ENCODE measurements at regions of chr1 and their contacts with region 1.

Region 1: GRCh38 chr1:85276215-85276977 is at the start of gene BCL10:
- DNase-seq: peak; percentile 95 to 98 (median 97)
- ATAC-seq: peak; percentile 97
- H3K4me3 ChIP-seq: peak within 1 kb of the TSS; percentile 89
- H3K4me3 Mint-ChIP-seq: peak within 1 kb of the TSS; percentile 82 to 95 (median 90)
- H3K27ac ChIP-seq: peak within 1 kb of the TSS; percentile 97
- H3K27ac Mint-ChIP-seq: peak within 1 kb of the TSS; percentile 84 to 97 (median 95)
- H3K4me1 ChIP-seq: peaks cover 17 to 28% of the 10 kb centered on the region in 2 donors
- H3K4me1 Mint-ChIP-seq: peaks cover 36 to 55% (median 47%) of the 10 kb centered on the region in 7 donors
- H3K27me3 ChIP-seq: no peaks in the 10 kb centered on the region
- H3K27me3 Mint-ChIP-seq: peaks cover 0 to 21% (median 0%) of the 10 kb centered on the region in 5 donors
- total RNA-seq, gene BCL10: 30.4 to 53.0 (median 35.4) TPM

Region 2: DNA sequence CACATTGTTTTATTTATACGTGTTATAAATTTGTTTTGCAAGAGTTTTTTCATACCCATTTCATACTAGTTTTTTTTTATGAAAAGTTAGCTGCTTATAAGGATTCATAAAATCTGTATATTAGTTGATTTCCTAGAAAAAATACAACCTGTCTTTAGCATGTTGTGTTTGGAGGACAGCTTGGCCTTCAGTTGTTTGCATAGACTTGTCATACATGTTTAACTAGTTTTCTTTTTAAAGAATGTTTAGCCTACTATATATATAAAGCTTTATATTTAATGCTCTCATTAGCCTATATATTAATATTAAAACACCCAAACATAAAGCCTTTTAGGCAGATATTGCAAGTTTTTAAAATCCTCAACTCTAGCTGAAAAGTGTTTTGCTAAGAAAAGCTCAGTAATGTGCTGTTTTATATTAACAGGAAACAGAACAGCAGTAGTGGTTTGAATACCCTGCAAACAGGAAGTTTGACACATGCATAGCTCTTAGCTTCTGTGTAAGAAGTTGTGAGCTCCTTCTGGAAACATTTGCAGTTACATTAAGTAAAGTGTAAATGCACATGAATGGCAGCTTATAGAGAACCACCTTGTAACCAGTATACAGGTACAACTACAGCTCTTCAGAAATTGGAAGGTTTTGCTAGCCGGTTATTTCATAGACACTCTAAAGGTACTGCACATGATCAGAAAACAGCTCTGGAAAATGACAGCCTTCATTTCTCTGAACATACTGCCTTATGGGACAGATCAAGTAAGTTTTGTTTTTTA is 1132.4 kb before region 1 on chr1 and contains the start of gene PRKACB:
- CTCF ChIA-PET with region 1: no interaction called
- POLR2A ChIA-PET with region 1: interaction called, 6 read pairs
- intact Hi-C with region 1: loop called (anchors 1 to 5 kb)
- DNase-seq: peak in 7 of 9 donors; percentile 59 to 79 (median 70)
- ATAC-seq: peak; percentile 94
- H3K4me3 ChIP-seq: peak within 1 kb of the TSS; percentile 71
- H3K4me3 Mint-ChIP-seq: peak within 1 kb of the TSS; percentile 88 to 100 (median 96)
- H3K27ac ChIP-seq: peak within 1 kb of the TSS; percentile 74
- H3K27ac Mint-ChIP-seq: peak within 1 kb of the TSS; percentile 97 to 100 (median 99)
- H3K4me1 ChIP-seq: peaks cover 27 to 33% of the 10 kb centered on the region in 2 donors
- H3K4me1 Mint-ChIP-seq: peaks cover 17 to 51% (median 39%) of the 10 kb centered on the region in 7 donors
- H3K27me3 ChIP-seq: no peaks in the 10 kb centered on the region
- H3K27me3 Mint-ChIP-seq: no peaks in the 10 kb centered on the region
- total RNA-seq, gene PRKACB: 71.1 to 176 (median 89.3) TPM

Region 3: GRCh38 chr1:84506002-84506728 is 770.2 kb before region 1 on chr1 and contains the starts of genes GNG5 and SPATA1:
- CTCF ChIA-PET with region 1: interaction called, 3 read pairs
- POLR2A ChIA-PET with region 1: no interaction called
- intact Hi-C with region 1: loop called (anchors 2 to 10 kb)
- DNase-seq: peak; percentile 94 to 98 (median 96)
- ATAC-seq: peak; percentile 95
- H3K4me3 ChIP-seq: peak within 1 kb of the TSS; percentile 94
- H3K4me3 Mint-ChIP-seq: peak within 1 kb of the TSS; percentile 94 to 100 (median 98)
- H3K27ac ChIP-seq: peak within 1 kb of the TSS; percentile 76
- H3K27ac Mint-ChIP-seq: peak within 1 kb of the TSS; percentile 93 to 99 (median 96)
- H3K4me1 ChIP-seq: peaks cover 15 to 27% of the 10 kb centered on the region in 2 donors
- H3K4me1 Mint-ChIP-seq: peaks cover 18 to 54% (median 50%) of the 10 kb centered on the region in 7 donors
- H3K27me3 ChIP-seq: no peaks in the 10 kb centered on the region
- H3K27me3 Mint-ChIP-seq: peaks cover 0 to 2% (median 0%) of the 10 kb centered on the region in 5 donors
- total RNA-seq, gene GNG5: 24.8 to 90.7 (median 28.9) TPM
- total RNA-seq, gene SPATA1: 1.7 to 3.6 (median 2.2) TPM in 4 of 5 experiments, not detected in the other

Region 4: DNA sequence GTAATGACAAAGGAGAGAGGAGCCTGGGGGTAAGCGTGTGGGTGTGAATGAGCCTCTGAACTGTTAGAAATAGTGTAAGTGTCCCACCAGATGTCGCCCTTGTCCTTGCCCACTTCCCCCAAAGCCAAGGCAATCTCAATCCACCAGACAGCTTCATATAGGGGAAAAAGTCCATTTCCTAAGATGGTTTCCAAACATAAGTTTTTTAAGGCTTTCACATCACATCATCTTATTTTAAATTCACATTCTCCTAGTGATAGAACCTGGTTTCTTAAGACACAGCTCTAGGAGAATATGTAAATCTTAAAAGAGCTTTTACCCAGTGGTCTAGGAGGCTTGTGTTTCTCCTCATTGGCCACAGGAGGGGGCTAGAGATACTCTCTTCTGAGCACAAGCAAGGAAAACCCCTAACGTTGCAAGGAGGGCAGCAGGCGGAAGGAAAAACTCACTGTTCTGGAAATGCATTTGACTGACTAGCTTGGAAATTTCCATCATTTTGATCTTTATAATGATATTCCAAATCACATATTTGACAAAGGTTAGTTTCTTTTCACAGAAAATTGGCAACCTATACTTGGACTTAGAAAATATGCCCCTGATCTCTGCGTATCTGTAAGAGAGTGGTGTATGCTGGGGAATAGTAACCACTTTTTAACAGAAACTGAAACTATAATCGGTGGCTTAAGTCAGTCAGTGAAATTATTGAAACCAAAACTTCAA is 331.5 kb before region 1 on chr1:
- CTCF ChIA-PET with region 1: interaction called, 13 read pairs
- POLR2A ChIA-PET with region 1: interaction called, 13 read pairs
- intact Hi-C with region 1: loop called (anchors 1 kb)
- DNase-seq: peak; percentile 20 to 94 (median 90)
- ATAC-seq: peak; percentile 98
- H3K4me3 ChIP-seq: peak overlapping the region; percentile 63
- H3K4me3 Mint-ChIP-seq: peak overlapping the region; percentile 72 to 93 (median 86)
- H3K27ac ChIP-seq: peak overlapping the region; percentile 89
- H3K27ac Mint-ChIP-seq: peak overlapping the region; percentile 87 to 98 (median 96)
- H3K4me1 ChIP-seq: peaks cover 5 to 9% of the 10 kb centered on the region in 2 donors
- H3K4me1 Mint-ChIP-seq: peaks cover 7 to 25% (median 12%) of the 10 kb centered on the region in 7 donors
- H3K27me3 ChIP-seq: no peaks in the 10 kb centered on the region
- H3K27me3 Mint-ChIP-seq: peaks cover 0 to 5% (median 0%) of the 10 kb centered on the region in 5 donors

Region 5: GRCh38 chr1:85259118-85259911 is 17.1 kb before region 1 on chr1 and contains the start of gene C1orf52:
- CTCF ChIA-PET with region 1: interaction called, 29 read pairs
- POLR2A ChIA-PET with region 1: interaction called, 63 read pairs
- intact Hi-C with region 1: loop called (anchors 1 kb)
- DNase-seq: peak; percentile 92 to 99 (median 96)
- ATAC-seq: peak; percentile 99
- H3K4me3 ChIP-seq: peak within 1 kb of the TSS; percentile 83
- H3K4me3 Mint-ChIP-seq: peak within 1 kb of the TSS; percentile 93 to 99 (median 98)
- H3K27ac ChIP-seq: peak within 1 kb of the TSS; percentile 90
- H3K27ac Mint-ChIP-seq: peak within 1 kb of the TSS; percentile 91 to 98 (median 96)
- H3K4me1 ChIP-seq: peaks cover 14 to 16% of the 10 kb centered on the region in 2 donors
- H3K4me1 Mint-ChIP-seq: peaks cover 19 to 52% (median 45%) of the 10 kb centered on the region in 7 donors
- H3K27me3 ChIP-seq: no peaks in the 10 kb centered on the region
- H3K27me3 Mint-ChIP-seq: no peaks in the 10 kb centered on the region
- total RNA-seq, gene C1orf52: 25.7 to 55.4 (median 46.1) TPM

Region 6: GRCh38 chr1:85707990-85708828 is 431.8 kb after region 1 on chr1 and contains the start of gene ZNHIT6:
- CTCF ChIA-PET with region 1: no interaction called
- POLR2A ChIA-PET with region 1: interaction called, 4 read pairs
- intact Hi-C with region 1: loop called (anchors 1 kb)
- DNase-seq: peak; percentile 62 to 94 (median 89)
- ATAC-seq: peak; percentile 99
- H3K4me3 ChIP-seq: peak within 1 kb of the TSS; percentile 90
- H3K4me3 Mint-ChIP-seq: no peak within 1 kb of the TSS
- H3K27ac ChIP-seq: peak within 1 kb of the TSS; percentile 77
- H3K27ac Mint-ChIP-seq: no peak within 1 kb of the TSS
- H3K4me1 ChIP-seq: peaks cover 14 to 21% of the 10 kb centered on the region in 2 donors
- H3K4me1 Mint-ChIP-seq: peaks cover 11 to 33% (median 18%) of the 10 kb centered on the region in 7 donors
- H3K27me3 ChIP-seq: no peaks in the 10 kb centered on the region
- H3K27me3 Mint-ChIP-seq: no peaks in the 10 kb centered on the region
- total RNA-seq, gene ZNHIT6: 13.8 to 22.2 (median 20.2) TPM

Region 7: DNA sequence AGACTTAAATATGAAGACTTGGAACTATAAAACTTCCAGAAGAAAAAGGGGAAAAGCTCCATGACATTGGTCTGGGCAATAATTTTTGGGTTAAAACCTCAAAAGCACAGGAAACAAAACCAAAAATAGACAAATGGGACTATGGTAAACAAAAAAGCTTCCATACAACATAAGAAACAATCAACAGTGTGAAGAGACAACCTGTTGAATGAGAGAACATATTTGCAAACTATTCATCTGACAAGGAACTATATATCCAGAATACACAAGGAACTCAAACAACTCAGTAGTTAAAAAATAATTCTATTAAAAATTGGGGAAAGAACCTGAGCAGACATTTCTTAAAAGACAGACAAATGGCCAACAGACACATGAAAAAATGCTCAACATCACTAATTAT is 624.5 kb after region 1 on chr1:
- CTCF ChIA-PET with region 1: no interaction called
- POLR2A ChIA-PET with region 1: no interaction called
- intact Hi-C with region 1: no loop called
- DNase-seq: no peak
- ATAC-seq: no peak
- H3K4me3 ChIP-seq: no peak overlapping the region
- H3K4me3 Mint-ChIP-seq: no peak overlapping the region
- H3K27ac ChIP-seq: no peak overlapping the region
- H3K27ac Mint-ChIP-seq: no peak overlapping the region
- H3K4me1 ChIP-seq: no peaks in the 10 kb centered on the region
- H3K4me1 Mint-ChIP-seq: no peaks in the 10 kb centered on the region
- H3K27me3 ChIP-seq: no peaks in the 10 kb centered on the region
- H3K27me3 Mint-ChIP-seq: peaks cover 0 to 4% (median 0%) of the 10 kb centered on the region in 5 donors

Region 8: DNA sequence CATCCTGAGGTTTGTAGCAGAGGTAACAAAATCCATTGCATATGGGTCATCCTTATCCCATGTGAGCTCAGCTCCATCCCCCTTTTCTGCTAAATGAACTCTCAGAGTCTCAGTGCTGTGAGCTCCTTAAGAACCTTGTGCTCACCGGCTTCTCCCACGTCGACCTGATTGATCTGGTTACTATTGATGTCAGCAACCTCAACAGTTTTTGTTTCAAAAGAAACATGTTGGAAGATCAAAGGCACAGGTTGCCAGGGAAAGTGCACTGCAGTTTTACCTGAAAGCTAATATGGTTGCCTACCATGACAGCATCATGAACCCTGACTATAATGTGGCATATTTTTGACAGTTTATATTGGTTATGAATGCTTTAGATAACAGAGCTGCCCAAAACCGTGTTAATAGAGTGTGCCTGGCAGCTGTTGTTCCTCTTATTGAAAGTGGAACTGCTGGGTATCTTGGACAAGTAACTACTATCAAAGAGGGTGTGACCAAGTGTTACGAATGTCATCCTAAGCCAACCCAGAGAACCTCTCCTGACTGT is 1769.4 kb after region 1 on chr1:
- CTCF ChIA-PET with region 1: no interaction called
- POLR2A ChIA-PET with region 1: no interaction called
- intact Hi-C with region 1: loop called in 1 of 2 experiments (anchors 10 kb)
- DNase-seq: peak; percentile 7 to 91 (median 85)
- ATAC-seq: peak; percentile 82
- H3K4me3 ChIP-seq: no peak overlapping the region
- H3K4me3 Mint-ChIP-seq: peak overlapping the region; percentile 31 to 87 (median 64)
- H3K27ac ChIP-seq: peak overlapping the region; percentile 58
- H3K27ac Mint-ChIP-seq: peak overlapping the region; percentile 52 to 100 (median 94)
- H3K4me1 ChIP-seq: peaks cover 10 to 21% of the 10 kb centered on the region in 2 donors
- H3K4me1 Mint-ChIP-seq: peaks cover 24 to 72% (median 60%) of the 10 kb centered on the region in 7 donors
- H3K27me3 ChIP-seq: no peaks in the 10 kb centered on the region
- H3K27me3 Mint-ChIP-seq: no peaks in the 10 kb centered on the region

Measured in naive thymus-derived CD4-positive, alpha-beta T cell (primary cell).